Activated naive CD4-positive, alpha-beta T cell treated with anti-CD3 and anti-CD28 coated beads for 36 hours (primary cell): ENCODE measurements at regions of chr5 and their contacts with region 1.

Region 1: GRCh38 chr5:181223058-181223728 is at the start of gene TRIM41:
- DNase-seq: peak; percentile 97
- H3K4me3 Mint-ChIP-seq: peak within 1 kb of the TSS; percentile 96
- H3K27ac Mint-ChIP-seq: peak within 1 kb of the TSS; percentile 100
- H3K4me1 Mint-ChIP-seq: peaks cover 55% of the 10 kb centered on the region
- H3K27me3 Mint-ChIP-seq: peaks cover 6% of the 10 kb centered on the region
- total RNA-seq, gene TRIM41: 36.5 to 37.3 TPM

Region 2: GRCh38 chr5:180810210-180810958 is 412.8 kb before region 1 on chr5:
- CTCF ChIA-PET with region 1: no interaction called
- intact Hi-C with region 1: loop called (anchors 1 kb)
- DNase-seq: peak; percentile 96
- H3K4me3 Mint-ChIP-seq: peak overlapping the region; percentile 98
- H3K27ac Mint-ChIP-seq: peak overlapping the region; percentile 99
- H3K4me1 Mint-ChIP-seq: peaks cover 69% of the 10 kb centered on the region
- H3K27me3 Mint-ChIP-seq: no peaks in the 10 kb centered on the region

Region 3: GRCh38 chr5:181181650-181182565 is 41.3 kb before region 1 on chr5:
- CTCF ChIA-PET with region 1: interaction called, 6 read pairs
- intact Hi-C with region 1: loop called (anchors 1 kb)
- DNase-seq: peak; percentile 82
- H3K4me3 Mint-ChIP-seq: peak overlapping the region; percentile 20
- H3K27ac Mint-ChIP-seq: no peak overlapping the region
- H3K4me1 Mint-ChIP-seq: peaks cover 19% of the 10 kb centered on the region
- H3K27me3 Mint-ChIP-seq: peaks cover 4% of the 10 kb centered on the region

Region 4: DNA sequence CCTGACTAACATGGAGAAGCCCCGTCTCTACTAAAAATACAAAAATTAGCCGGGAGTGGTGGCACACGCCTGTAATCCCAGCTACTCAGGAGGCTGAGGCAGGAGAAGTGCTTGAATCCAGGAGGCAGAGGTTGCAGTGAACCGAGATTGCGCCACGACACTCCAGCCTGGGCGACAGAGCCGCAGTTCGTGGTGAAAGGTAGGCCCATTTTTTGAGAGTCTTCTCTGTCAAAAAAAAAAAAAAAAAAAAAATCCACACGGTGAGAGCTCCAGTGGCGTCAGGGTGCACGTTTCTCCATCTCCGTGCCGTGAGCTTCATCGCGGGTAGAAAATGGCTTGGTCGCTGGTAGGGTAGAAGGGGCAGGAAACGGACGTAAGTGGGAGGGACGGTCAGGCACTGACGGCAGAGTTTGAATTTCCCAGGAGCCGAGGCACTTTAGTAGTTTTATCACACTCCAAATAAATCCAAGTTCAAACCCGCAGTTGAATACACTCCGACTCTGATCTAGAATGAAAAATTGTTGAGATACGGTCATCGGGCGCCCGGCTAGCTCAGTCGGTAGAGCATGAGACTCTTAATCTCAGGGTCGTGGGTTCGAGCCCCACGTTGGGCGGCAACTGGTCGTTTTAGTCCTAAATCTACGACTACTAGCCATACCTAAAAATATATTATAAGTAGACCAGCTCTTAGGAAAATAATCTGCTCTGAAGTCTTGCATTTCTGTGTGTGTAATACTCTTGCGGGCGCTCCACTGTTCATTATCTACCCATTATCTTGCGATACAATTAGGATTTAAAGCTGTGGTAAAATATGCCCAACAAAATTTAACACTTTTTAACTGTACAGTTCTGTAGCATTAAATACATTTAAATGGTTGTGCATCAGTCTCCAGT is 15.7 kb before region 1 on chr5:
- CTCF ChIA-PET with region 1: interaction called, 6 read pairs
- intact Hi-C with region 1: loop called (anchors 1 kb)
- DNase-seq: peak; percentile 92
- H3K4me3 Mint-ChIP-seq: peak overlapping the region; percentile 92
- H3K27ac Mint-ChIP-seq: peak overlapping the region; percentile 94
- H3K4me1 Mint-ChIP-seq: peaks cover 32% of the 10 kb centered on the region
- H3K27me3 Mint-ChIP-seq: peaks cover 19% of the 10 kb centered on the region

Region 5: DNA sequence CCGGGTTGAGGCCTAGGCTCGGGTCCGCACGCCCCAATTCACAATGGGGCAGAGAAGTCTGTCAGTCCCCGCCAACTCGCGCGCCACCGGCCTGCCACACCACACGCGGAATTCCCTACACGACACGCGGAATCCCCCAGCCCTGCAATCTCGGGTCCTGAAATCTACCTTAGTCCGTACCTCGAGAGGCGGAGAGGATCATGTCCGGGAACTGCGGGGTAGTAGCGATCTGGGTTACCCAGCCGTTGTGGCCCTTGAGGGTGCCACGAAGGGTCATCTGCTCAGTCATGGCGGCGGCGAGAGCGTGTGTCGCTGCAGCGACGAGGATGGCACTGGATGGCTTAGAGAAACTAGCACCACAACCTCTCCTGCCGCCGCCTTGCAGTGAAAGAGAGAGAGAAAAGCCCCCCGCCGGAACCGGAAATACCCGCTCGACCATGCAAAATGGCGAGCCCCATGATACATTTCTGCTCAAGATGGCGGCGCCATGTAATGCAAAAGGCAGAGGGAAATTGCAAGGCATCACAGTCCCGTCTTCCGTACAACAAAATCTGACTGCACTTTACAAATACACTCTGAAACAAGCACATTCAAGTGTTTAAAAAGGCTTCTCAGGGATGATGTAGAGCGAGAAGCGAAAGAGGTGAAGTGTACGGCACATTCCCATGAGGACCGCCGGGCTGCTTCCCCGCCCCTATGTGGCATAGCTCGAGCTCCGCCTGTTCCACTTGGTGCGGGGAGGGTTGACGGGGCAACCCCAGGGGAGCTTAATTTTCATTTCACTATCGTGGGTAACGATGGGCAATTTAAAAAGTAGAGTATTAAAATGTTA is 20.5 kb after region 1 on chr5 and contains the start of gene RACK1:
- CTCF ChIA-PET with region 1: interaction called, 6 read pairs
- intact Hi-C with region 1: loop called (anchors 1 kb)
- DNase-seq: peak; percentile 94
- H3K4me3 Mint-ChIP-seq: peak within 1 kb of the TSS; percentile 95
- H3K27ac Mint-ChIP-seq: peak within 1 kb of the TSS; percentile 99
- H3K4me1 Mint-ChIP-seq: peaks cover 60% of the 10 kb centered on the region
- H3K27me3 Mint-ChIP-seq: no peaks in the 10 kb centered on the region
- total RNA-seq, gene RACK1: 3,176 to 3,362 TPM

Region 6: DNA sequence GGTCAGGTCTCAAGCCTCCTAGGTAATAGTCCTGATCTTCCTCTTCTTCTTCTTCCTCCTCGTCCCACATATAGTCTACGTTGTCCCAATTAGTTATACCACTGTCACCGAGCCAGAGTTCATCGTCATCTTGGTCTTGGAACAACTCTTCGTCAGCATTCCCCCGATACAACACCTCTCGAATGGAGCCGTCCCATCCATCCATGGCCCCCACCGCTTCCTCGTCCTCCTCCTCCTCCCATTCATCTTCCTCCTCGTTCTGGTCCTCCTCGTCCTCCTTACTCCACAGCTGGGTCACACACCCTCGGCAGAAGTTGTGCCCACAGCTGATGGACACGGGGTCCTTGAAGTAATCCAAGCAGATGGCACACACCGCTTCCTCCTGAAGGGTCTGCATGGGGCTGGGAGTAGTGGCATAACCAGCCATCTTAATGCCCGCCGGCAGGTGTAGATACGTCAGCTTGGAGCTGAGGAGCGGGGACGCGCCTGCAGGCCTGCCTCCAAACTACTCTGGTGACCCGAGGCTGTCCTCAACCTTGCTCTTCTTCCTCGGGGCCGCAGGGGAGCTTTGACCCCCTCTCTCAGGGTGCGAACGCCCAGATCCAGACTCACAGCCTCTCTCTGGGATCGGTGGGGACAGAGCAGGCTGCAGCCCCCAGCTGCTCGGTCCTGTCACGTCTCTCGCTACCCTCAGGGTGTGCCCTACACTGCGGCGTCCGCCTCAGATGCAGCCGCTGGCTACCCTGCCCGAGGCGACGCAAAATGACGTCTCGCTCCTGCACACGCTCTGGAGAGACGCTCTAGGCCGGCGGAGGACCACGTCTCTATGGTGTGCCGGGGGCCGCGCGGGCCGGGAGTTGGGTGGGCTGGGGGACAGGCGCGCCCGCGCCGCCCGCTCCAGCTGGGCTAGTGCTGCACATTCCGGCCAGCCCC is 37.5 kb after region 1 on chr5 and contains the start of gene TRIM52:
- CTCF ChIA-PET with region 1: no interaction called
- intact Hi-C with region 1: loop called (anchors 1 kb)
- DNase-seq: peak; percentile 91
- H3K4me3 Mint-ChIP-seq: peak within 1 kb of the TSS; percentile 92
- H3K27ac Mint-ChIP-seq: peak within 1 kb of the TSS; percentile 94
- H3K4me1 Mint-ChIP-seq: peaks cover 37% of the 10 kb centered on the region
- H3K27me3 Mint-ChIP-seq: no peaks in the 10 kb centered on the region
- total RNA-seq, gene TRIM52: 10.5 to 10.9 TPM

Region 7: DNA sequence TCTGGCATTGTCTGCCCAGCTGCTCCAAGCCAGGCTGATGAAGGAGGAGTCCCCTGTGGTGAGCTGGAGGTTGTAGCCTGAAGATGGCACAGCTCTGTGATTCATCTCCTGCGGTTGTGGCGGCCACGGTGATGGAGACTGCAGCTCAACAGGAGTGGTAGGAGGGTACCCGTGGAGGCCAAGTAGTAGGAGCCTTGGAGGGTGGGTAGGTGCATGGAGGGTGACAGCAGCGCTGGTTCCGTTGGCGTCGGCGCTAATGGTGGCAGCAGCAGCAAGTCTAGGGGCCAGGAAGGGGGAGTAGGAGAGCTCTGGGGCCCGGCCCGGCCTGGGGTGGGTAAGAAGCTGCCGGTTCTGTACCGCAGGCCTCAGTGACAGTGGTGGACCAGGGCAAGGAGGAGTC is 60.2 kb after region 1 on chr5:
- CTCF ChIA-PET with region 1: no interaction called
- intact Hi-C with region 1: no loop called
- DNase-seq: no peak
- H3K4me3 Mint-ChIP-seq: no peak overlapping the region
- H3K27ac Mint-ChIP-seq: no peak overlapping the region
- H3K4me1 Mint-ChIP-seq: no peaks in the 10 kb centered on the region
- H3K27me3 Mint-ChIP-seq: no peaks in the 10 kb centered on the region